ENCODE measurements at regions of chr6 and their contacts with region 1.

Region 1: GRCh38 chr6:83490217-83490807 is 22.0 kb upstream of the PRSS35 start:
- DNase-seq: no peak
- ATAC-seq: no peak
- H3K4me3 ChIP-seq: no peak overlapping the region
- H3K27ac ChIP-seq: no peak overlapping the region
- H3K4me1 ChIP-seq: no peaks in the 10 kb centered on the region
- H3K27me3 ChIP-seq: peaks cover 3% of the 10 kb centered on the region; the same call in 1 of the 2 replicates
- CTCF ChIP-seq: no peak
- POLR2A ChIP-seq: no peak
- RAD21 ChIP-seq: no peak

Region 2: DNA sequence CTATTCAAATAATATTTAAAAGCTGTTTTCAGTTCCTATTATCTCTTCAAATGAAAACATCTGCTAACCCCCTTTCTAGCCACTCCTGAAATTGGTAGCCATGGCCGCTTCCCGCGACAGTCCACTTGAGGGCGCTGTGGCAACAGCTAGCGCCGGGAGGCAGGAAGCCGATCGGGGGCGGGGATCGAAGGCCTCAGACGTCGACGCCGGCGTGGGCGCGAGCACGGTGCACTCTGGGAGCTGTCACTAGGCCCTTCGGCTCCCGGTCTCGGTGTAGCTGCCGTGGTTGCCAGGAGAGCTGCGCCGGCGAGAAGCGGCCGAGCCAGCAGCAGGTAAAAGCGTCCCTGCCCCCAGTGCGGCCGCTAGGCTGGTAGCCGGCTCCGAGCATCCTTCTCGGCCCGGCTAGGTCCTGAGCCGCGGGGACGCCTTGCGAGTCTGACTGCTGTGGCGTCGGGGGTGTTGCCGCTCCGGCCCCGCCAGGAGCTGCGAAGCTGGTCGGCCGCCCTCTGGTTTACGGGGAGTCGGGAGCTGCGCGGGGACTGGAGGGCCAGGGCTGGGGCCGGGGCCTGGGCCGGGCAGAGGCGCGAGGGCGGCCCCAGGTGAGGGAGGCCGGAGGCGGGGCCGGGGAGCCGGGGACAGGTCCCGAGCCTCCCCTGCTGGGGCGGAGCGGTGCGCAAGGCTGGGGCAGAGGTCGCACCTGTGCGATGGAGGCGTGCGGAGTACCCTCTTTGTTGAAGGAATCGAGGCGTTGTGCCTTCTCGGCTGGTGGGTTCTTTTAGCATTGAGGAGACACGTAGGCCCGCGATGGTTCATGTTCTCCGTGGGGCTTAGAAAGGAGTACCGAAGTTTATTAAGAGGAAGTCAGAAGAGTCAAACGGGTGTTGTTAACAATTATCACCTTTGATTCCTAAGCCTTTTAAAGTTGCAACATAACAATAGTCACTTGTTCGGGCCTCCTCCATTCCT is 422.6 kb before region 1 on chr6 and contains the start of gene DOP1A:
- CTCF ChIA-PET with region 1: no interaction called
- POLR2A ChIA-PET with region 1: no interaction called
- dilution Hi-C with region 1: no loop called
- in situ Hi-C with region 1: no loop called
- intact Hi-C with region 1: no loop called
- DNase-seq: peak; percentile 91
- ATAC-seq: peak; percentile 89
- H3K4me3 ChIP-seq: peak within 1 kb of the TSS; percentile 89
- H3K27ac ChIP-seq: peak within 1 kb of the TSS; percentile 62
- H3K4me1 ChIP-seq: no peaks in the 10 kb centered on the region
- H3K27me3 ChIP-seq: no peaks in the 10 kb centered on the region
- CTCF ChIP-seq: peak; percentile 99
- POLR2A ChIP-seq: 0 out of 2 replicates have a peak, but pooled peaks have one; percentile 31
- RAD21 ChIP-seq: peak; percentile 99
- total RNA-seq, gene DOP1A: 32.4 and 35.8 TPM in 2 replicates

Region 3: GRCh38 chr6:83417880-83418663 is 72.2 kb before region 1 on chr6:
- CTCF ChIA-PET with region 1: no interaction called
- POLR2A ChIA-PET with region 1: no interaction called
- dilution Hi-C with region 1: no loop called
- in situ Hi-C with region 1: no loop called
- intact Hi-C with region 1: loop called (anchors 5 kb)
- DNase-seq: peak; percentile 79
- ATAC-seq: peak; percentile 93
- H3K4me3 ChIP-seq: no peak overlapping the region
- H3K27ac ChIP-seq: no peak overlapping the region
- H3K4me1 ChIP-seq: 0 out of 2 replicates have a peak, but pooled peaks cover 2% of the 10 kb centered on the region
- H3K27me3 ChIP-seq: no peaks in the 10 kb centered on the region
- CTCF ChIP-seq: peak; percentile 76
- POLR2A ChIP-seq: no peak
- RAD21 ChIP-seq: peak; percentile 71

Region 4: GRCh38 chr6:83467620-83468036 is 22.7 kb before region 1 on chr6:
- CTCF ChIA-PET with region 1: no interaction called
- POLR2A ChIA-PET with region 1: no interaction called
- dilution Hi-C with region 1: no loop called
- in situ Hi-C with region 1: no loop called
- intact Hi-C with region 1: no loop called
- DNase-seq: no peak
- ATAC-seq: no peak
- H3K4me3 ChIP-seq: no peak overlapping the region
- H3K27ac ChIP-seq: no peak overlapping the region
- H3K4me1 ChIP-seq: no peaks in the 10 kb centered on the region
- H3K27me3 ChIP-seq: no peaks in the 10 kb centered on the region
- CTCF ChIP-seq: no peak
- POLR2A ChIP-seq: no peak
- RAD21 ChIP-seq: no peak

Region 5: DNA sequence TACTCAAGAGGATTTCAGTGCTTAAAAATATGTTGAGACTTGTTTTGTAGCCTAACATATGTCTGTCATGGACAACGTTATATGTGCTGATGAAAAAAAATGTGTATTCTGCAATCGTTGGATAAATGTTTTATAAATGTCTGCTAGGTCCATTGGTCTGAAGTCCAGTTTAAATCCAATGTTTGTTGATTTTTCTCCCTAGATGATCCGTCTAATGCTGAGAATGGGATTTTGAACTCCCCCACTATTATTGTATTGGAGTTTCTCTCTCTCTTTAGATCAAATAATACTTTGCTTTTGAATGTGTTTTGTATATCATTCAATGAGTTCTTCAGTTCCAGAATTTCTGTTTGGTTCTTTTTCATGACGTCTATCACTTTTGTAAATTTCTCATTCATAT is 414.1 kb after region 1 on chr6:
- CTCF ChIA-PET with region 1: no interaction called
- POLR2A ChIA-PET with region 1: no interaction called
- dilution Hi-C with region 1: no loop called
- in situ Hi-C with region 1: loop called (anchors 5 kb)
- intact Hi-C with region 1: loop called (anchors 5 kb)
- DNase-seq: no peak
- ATAC-seq: no peak
- H3K4me3 ChIP-seq: no peak overlapping the region
- H3K27ac ChIP-seq: no peak overlapping the region
- H3K4me1 ChIP-seq: peaks cover 1% of the 10 kb centered on the region; the same call in 1 of the 2 replicates
- H3K27me3 ChIP-seq: no peaks in the 10 kb centered on the region
- CTCF ChIP-seq: no peak
- POLR2A ChIP-seq: no peak
- RAD21 ChIP-seq: no peak